Activated naive CD4-positive, alpha-beta T cell treated with anti-CD3 and anti-CD28 coated beads for 36 hours (primary cell): ENCODE measurements at regions of chr19 and their contacts with region 1.

Region 1: DNA sequence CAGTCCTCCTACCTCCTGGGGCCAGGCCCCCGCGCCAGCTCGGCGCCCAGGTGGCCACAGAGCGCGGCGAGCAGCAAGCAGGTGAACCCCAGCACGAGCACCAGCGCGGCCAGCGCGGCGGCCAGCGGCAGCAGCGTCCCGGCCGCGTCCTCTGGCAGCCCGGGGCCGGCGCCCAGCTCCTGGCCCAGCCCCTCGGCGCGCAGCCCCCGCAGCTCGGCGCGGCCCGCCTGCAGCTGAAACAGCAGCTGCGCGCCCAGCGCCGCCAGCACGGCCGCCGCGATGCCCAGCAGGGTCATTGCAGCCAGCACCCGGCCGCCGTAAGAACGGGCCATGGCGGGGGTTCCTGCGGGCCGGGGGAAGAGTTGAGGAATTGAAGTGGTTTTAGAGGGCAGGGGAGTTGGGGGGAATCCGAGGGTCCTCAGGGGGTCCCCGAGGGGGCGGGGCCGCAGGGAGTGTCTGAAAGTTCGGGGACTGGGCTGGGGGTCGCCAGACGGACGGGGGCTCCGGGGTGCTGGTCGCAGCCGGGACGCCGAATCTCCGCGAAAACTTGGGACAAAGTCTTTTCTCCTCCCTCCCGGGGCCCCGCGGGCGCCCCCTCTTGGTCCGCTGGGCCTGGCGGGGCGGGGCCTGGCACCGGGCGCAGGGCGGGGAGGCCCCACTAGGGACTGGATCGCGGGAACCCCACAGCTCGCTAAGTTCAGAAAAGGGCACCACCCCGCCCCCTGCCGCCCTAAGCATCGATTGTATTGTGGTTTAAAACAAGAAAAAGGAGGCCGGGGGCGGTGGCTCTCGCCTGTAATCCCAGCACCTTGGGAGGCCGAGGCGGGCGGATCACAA is at the start of gene TMEM221:
- DNase-seq: peak; percentile 80
- H3K4me3 Mint-ChIP-seq: peak within 1 kb of the TSS; percentile 27
- H3K27ac Mint-ChIP-seq: no peak within 1 kb of the TSS
- H3K4me1 Mint-ChIP-seq: peaks cover 14% of the 10 kb centered on the region
- H3K27me3 Mint-ChIP-seq: peaks cover 12% of the 10 kb centered on the region
- total RNA-seq, gene TMEM221: not detected

Region 2: GRCh38 chr19:17292286-17293097 is 155.9 kb before region 1 on chr19:
- CTCF ChIA-PET with region 1: no interaction called
- intact Hi-C with region 1: loop called (anchors 2 kb)
- DNase-seq: peak; percentile 88
- H3K4me3 Mint-ChIP-seq: peak overlapping the region; percentile 87
- H3K27ac Mint-ChIP-seq: peak overlapping the region; percentile 56
- H3K4me1 Mint-ChIP-seq: peaks cover 8% of the 10 kb centered on the region
- H3K27me3 Mint-ChIP-seq: no peaks in the 10 kb centered on the region

Region 3: GRCh38 chr19:17405250-17406038 is 42.9 kb before region 1 on chr19 and contains the start of gene BST2:
- CTCF ChIA-PET with region 1: no interaction called
- intact Hi-C with region 1: loop called (anchors 1 kb)
- DNase-seq: peak; percentile 69
- H3K4me3 Mint-ChIP-seq: peak within 1 kb of the TSS; percentile 80
- H3K27ac Mint-ChIP-seq: peak within 1 kb of the TSS; percentile 94
- H3K4me1 Mint-ChIP-seq: peaks cover 33% of the 10 kb centered on the region
- H3K27me3 Mint-ChIP-seq: no peaks in the 10 kb centered on the region
- total RNA-seq, gene BST2: 117 to 121 TPM

Region 4: DNA sequence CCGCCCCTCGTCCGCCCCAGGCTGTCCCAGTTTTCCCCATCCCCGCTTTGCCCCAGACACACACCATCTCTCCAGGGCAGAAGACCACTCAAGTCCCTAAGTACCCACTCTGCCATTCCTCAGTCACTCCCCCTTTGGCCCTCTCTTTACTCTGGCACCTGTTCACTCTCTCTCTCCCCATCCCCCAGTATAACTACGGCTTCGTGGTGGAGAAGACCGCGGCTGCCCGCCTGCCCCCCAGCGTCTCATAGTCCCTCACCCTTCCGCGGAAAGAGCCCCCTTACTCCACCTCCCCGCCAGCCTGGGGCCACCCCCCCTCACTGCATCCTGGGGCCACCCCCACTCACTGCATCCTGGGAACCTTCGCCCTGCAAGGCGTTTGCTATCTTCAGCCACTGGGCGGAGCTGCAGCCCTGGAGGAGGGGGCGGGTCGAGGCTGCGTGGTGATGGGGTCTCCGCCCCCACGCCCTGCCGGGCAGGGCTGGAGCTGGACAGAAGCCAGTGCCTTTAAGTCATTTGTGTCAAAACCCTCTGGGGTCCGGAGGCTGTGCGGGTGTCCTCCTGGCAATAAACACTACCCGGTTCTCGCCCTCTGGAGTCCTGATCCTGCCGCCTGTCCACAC is 23.5 kb before region 1 on chr19:
- CTCF ChIA-PET with region 1: interaction called, 3 read pairs
- intact Hi-C with region 1: loop called (anchors 2 kb)
- DNase-seq: peak; percentile 69
- H3K4me3 Mint-ChIP-seq: no peak overlapping the region
- H3K27ac Mint-ChIP-seq: no peak overlapping the region
- H3K4me1 Mint-ChIP-seq: peaks cover 7% of the 10 kb centered on the region
- H3K27me3 Mint-ChIP-seq: no peaks in the 10 kb centered on the region

Region 5: GRCh38 chr19:17579661-17580244 is 131.4 kb after region 1 on chr19:
- CTCF ChIA-PET with region 1: no interaction called
- intact Hi-C with region 1: loop called (anchors 2 kb)
- DNase-seq: no peak
- H3K4me3 Mint-ChIP-seq: no peak overlapping the region
- H3K27ac Mint-ChIP-seq: no peak overlapping the region
- H3K4me1 Mint-ChIP-seq: no peaks in the 10 kb centered on the region
- H3K27me3 Mint-ChIP-seq: no peaks in the 10 kb centered on the region